Esophagus muscularis mucosa (tissue), 4 donors: ENCODE measurements at regions of chr17 and their contacts with region 1.

Region 1: DNA sequence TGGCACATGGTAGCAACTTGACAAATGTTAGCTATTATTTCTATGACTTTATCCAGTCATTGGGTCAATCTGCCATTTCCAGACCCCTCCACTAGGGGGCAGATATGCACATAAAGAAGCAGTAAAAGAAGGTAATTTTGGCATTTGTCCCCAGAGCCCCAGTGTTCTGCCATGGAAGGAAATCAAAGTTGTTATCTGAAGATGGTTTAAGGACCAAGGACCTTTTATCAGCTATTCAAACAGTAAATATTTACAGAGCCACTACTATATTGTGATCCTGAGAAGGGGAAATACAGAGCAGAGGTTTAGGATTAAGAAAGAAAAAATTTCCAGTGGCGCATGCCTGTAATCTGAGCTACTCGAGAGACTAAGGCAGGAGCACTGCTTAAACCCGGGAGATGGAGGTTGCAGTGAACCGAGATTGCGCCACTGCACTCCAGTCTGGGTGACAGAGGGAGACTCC is 20.0 kb downstream of the TRAF4 start:
- DNase-seq: no peak
- H3K4me3 ChIP-seq: no peak overlapping the region
- H3K27ac ChIP-seq: no peak overlapping the region
- H3K4me1 ChIP-seq: peaks cover 17 to 27% (median 27%) of the 10 kb centered on the region in 4 donors
- H3K27me3 ChIP-seq: no peaks in the 10 kb centered on the region
- CTCF ChIP-seq: peak; percentile 90 to 93 (median 90)
- EP300 ChIP-seq: no peak
- POLR2A ChIP-seq: no peak

Region 2: GRCh38 chr17:28720247-28720996 is 43.4 kb before region 1 on chr17:
- intact Hi-C with region 1: loop called (anchors 5 kb)
- DNase-seq: no peak
- H3K4me3 ChIP-seq: peak overlapping the region; percentile 67 to 95 (median 76)
- H3K27ac ChIP-seq: peak overlapping the region; percentile 88 to 97 (median 90)
- H3K4me1 ChIP-seq: peaks cover 54 to 79% (median 67%) of the 10 kb centered on the region in 4 donors
- H3K27me3 ChIP-seq: no peaks in the 10 kb centered on the region
- CTCF ChIP-seq: no peak
- EP300 ChIP-seq: no peak
- POLR2A ChIP-seq: no peak

Region 3: DNA sequence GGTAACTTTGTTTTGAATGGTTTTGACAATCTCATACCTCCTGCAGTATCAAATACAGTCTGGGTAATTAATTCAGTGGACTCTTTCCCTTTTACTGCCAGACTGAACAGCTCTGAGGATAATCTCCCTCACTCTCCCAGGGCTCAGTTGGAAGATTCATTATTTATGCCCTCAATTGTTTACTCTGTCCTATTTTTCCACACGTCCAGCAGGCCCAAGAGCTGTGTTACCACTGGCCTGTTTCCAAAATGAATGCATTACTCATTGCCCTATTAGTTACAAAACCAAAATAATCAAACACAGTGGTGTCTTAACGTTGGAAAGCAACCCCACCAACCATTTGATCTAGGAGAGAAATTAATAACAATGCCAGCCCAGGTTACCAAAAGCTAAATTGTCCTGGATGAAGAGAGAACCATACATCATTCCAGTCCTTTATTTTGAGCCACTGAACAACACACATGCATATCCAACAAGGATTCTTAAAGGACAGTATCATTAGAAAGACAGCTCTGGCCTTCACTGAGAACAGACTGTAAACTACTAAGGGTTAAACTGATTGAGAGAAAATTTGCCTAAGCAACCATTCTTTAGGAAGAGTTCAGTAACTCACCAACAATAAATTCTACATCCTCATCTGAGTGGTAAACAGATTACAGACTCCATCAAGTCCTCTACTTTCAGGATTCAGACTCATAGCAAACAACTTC is 44.2 kb after region 1 on chr17:
- intact Hi-C with region 1: loop called (anchors 5 kb)
- DNase-seq: no peak
- H3K4me3 ChIP-seq: peak overlapping the region; percentile 2 to 39 (median 16)
- H3K27ac ChIP-seq: peak overlapping the region; percentile 89 to 96 (median 94)
- H3K4me1 ChIP-seq: peaks cover 38 to 80% (median 64%) of the 10 kb centered on the region in 4 donors
- H3K27me3 ChIP-seq: no peaks in the 10 kb centered on the region
- CTCF ChIP-seq: no peak
- EP300 ChIP-seq: no peak
- POLR2A ChIP-seq: no peak

Region 4: GRCh38 chr17:28842282-28843012 is 78.6 kb after region 1 on chr17 and contains the start of gene FAM222B:
- intact Hi-C with region 1: loop called (anchors 5 kb)
- DNase-seq: no peak
- H3K4me3 ChIP-seq: peak within 1 kb of the TSS; percentile 75 to 97 (median 83)
- H3K27ac ChIP-seq: peak within 1 kb of the TSS; percentile 75 to 88 (median 83)
- H3K4me1 ChIP-seq: peaks cover 8 to 34% (median 25%) of the 10 kb centered on the region in 4 donors
- H3K27me3 ChIP-seq: no peaks in the 10 kb centered on the region
- CTCF ChIP-seq: peak in 1 of 3 experiments; percentile 39
- EP300 ChIP-seq: no peak
- POLR2A ChIP-seq: peak; percentile 69
- total RNA-seq, gene FAM222B: 15.9 to 48.1 (median 30.3) TPM

Region 5: DNA sequence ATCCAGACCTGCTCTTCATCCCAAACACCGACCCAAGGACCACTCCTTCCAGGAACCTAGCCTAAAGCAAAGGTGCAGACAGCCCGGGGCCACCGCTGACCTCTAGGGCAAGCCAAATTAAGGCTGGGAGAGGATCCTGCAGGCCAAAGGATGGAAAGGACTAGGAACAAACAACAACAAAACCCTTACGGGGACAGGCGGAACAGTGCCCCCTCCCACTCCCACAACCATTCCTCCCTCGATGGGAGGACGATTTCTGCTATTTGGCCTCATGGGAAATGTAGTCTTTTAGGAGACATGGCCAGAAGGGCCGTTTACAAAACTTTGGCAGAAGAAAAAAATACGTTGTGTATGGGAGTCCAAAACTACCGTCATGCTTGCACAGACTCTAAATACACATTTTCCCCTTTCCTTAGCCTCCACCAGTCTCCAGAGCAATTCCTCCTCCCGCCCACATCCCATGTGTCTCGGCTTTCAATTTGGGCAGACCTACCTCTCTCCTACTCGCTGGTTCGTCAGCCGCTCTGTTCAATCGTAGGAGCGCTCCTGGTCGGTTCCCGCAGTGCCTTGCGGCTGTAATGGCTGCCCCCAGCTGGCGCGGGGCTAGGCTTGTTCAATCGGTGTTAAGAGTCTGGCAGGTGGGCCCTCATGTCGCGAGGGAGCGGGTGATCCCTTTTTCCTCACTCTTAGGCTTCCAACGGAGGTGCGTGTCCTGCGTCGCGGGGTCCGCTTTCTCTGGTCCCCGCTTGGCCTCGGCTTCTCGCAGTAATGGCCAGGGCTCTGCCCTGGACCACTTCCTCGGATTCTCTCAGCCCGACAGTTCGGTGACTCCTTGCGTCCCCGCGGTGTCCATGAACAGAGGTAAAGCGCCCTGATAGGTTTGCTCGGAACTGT is 90.9 kb after region 1 on chr17 and contains the start of gene ERAL1:
- intact Hi-C with region 1: loop called (anchors 5 kb)
- DNase-seq: peak; percentile 95
- H3K4me3 ChIP-seq: peak within 1 kb of the TSS; percentile 65 to 80 (median 67)
- H3K27ac ChIP-seq: peak within 1 kb of the TSS; percentile 70 to 82 (median 76)
- H3K4me1 ChIP-seq: peaks cover 11 to 18% (median 16%) of the 10 kb centered on the region in 4 donors
- H3K27me3 ChIP-seq: no peaks in the 10 kb centered on the region
- CTCF ChIP-seq: peak in 1 of 3 experiments; percentile 30
- EP300 ChIP-seq: no peak
- POLR2A ChIP-seq: peak; percentile 30
- total RNA-seq, gene ERAL1: 24.5 to 38.0 (median 27.7) TPM

Region 6: DNA sequence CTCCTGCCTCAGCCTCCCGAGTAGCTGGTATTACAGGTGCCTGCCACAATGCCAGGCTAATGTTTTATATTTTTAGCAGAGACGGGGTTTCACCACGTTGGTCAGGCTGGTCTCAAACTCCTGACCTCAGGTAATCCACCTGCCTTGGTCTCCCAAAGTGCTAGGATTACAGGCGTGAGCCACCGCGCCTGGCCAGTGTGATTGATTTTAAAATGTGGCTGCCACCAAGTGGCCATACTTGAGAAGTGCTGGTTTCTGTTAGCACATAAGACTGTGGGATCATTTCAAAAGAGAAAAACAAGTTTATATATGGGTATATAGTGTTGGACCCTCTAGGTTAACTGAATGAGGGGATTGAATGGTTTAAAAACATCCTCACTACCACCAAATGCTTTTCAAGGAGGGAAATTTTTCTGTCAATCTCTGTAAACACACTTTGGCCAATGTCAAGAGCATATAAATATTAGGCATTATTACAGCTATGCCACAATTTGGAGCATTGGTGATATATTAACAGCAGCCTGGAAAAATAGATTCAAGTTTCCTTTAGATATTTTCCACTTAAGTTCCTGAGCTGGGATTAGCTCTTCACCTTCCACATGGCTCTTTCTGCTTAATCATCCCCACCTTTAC is 152.6 kb after region 1 on chr17:
- intact Hi-C with region 1: loop called (anchors 5 kb)
- DNase-seq: no peak
- H3K4me3 ChIP-seq: no peak overlapping the region
- H3K27ac ChIP-seq: peak overlapping the region in 1 of 4 donors; percentile 14
- H3K4me1 ChIP-seq: peaks cover 0 to 13% (median 2%) of the 10 kb centered on the region in 4 donors
- H3K27me3 ChIP-seq: peaks cover 0 to 3% (median 0%) of the 10 kb centered on the region in 4 donors
- CTCF ChIP-seq: peak; percentile 62 to 71 (median 64)
- EP300 ChIP-seq: no peak
- POLR2A ChIP-seq: no peak